Activated CD4-positive, alpha-beta T cell treated with anti-CD3 and anti-CD28 coated beads, Interleukin-2, amount 10 ng/mL, durations not matched to agents 7 days and 5 days (primary cell): ENCODE measurements at regions of chr1 and their contacts with region 1.

Region 1: DNA sequence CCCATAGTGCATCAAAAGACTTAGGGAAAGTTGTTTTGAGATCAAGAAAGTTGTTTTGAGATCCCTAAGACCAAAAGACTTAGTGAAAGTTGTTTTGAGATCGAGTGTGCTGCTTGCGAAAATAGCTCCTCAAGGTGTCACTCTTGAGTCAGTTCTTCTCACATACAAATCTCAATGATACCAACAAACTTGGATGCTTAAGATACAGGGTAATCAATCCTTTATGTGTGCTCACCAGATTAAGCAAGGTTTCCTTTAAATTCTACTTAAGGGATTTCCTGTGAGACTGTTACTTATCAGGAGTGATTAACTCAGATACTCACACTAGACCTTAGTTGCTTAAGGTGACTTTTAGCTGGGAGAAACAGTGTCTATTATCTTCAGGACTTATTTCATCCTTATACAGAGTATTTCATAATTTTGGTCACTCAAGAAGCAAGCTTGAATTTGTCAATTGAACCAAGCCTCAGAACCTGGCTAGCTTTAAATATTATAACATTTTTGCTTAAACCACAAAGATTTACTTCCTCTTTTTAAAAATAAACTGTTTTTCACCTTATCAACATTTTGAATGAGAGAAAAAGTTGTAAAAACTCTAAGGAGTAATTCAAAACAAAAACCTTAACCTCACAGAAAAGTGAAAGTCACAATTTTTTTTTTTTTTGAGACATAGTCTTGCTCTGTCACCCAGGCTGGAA is 8.0 kb upstream of the RLF start:
- DNase-seq: peak; percentile 64
- H3K4me3 Mint-ChIP-seq: no peak overlapping the region
- H3K27ac Mint-ChIP-seq: no peak overlapping the region
- H3K4me1 Mint-ChIP-seq: peaks cover 10% of the 10 kb centered on the region
- H3K27me3 Mint-ChIP-seq: peaks cover 2% of the 10 kb centered on the region

Region 2: DNA sequence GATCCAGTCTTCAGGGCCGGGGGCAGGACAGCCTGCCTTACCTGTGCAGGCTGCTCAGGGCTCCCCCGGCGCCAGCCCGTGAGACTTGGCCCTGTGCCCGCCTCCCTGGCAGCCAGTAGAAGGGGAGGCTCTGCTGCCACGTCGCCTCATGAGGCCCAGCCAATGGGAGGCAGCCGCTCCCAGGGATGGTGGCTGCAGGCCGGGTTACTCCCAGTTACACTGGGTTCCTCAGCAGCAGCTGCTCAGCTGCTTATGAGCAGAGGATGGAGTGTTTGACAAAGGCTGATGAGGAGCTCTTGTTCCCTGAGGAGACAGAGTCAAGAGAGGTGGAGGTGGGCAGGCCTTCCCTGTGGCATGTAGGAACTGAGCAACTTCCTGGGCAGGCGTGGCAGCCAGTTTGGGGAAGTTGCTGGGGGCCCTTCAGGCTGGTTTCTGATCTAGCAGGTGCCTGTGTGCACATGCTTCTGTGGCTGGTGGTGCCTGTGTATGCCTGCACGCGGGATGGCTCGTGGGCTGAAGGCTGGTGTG is 192.7 kb before region 1 on chr1:
- CTCF ChIA-PET with region 1: no interaction called
- POLR2A ChIA-PET with region 1: no interaction called
- DNase-seq: peak; percentile 45
- H3K4me3 Mint-ChIP-seq: peak overlapping the region; percentile 48
- H3K27ac Mint-ChIP-seq: peak overlapping the region; percentile 91
- H3K4me1 Mint-ChIP-seq: peaks cover 26% of the 10 kb centered on the region
- H3K27me3 Mint-ChIP-seq: no peaks in the 10 kb centered on the region

Region 3: GRCh38 chr1:40404670-40405462 is 251.6 kb after region 1 on chr1:
- CTCF ChIA-PET with region 1: interaction called, 17 read pairs
- POLR2A ChIA-PET with region 1: no interaction called
- DNase-seq: peak; percentile 57
- H3K4me3 Mint-ChIP-seq: peak overlapping the region; percentile 25
- H3K27ac Mint-ChIP-seq: peak overlapping the region; percentile 84
- H3K4me1 Mint-ChIP-seq: peaks cover 54% of the 10 kb centered on the region
- H3K27me3 Mint-ChIP-seq: no peaks in the 10 kb centered on the region